OCI-LY7 (cell line): ENCODE measurements at regions of chr2 and their contacts with region 1.

Region 1: DNA sequence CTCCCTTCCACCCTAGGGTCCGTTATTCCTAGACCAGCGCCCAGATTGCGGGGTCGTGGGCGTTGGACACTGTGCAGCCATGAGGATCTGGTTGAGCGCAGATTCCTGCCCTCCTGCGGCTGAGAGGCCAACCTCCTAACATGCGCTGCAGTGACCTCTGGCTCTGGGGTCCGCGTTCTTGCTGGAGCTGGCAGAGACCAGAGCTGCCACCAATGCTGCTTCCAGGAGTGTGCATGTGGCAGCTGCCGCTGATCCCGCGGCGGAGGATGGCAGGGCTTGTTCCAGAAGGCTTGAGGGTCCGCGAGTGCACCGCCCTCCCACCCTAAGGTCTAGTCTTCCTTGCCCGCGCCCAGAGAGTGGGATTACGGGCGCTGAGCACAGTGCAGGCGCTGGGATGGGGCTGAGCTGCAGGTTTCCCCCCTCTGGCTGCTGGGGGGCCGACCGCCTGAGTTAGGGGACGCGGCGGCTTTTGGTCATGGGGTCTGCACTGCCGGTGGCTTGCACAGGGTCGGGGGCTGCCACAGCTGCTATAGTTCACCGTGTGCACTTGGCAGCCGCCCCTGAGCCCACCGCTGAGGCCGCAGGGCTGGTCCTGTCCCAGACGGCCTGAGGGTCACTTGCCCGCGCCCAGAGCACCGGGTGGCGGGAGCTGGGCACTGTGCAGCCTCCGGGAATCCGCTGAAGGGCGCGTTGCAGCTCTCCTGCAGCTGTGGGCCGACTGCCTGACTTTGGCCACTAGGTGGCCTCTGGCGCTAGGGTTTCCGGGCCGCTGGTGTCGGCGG is 145.9 kb downstream of the CCDC74A start:
- DNase-seq: peak; percentile 81
- H3K4me3 ChIP-seq: peak overlapping the region; percentile 62
- H3K27ac ChIP-seq: no peak overlapping the region
- H3K4me1 ChIP-seq: peaks cover 37% of the 10 kb centered on the region
- CTCF ChIP-seq: peak; percentile 81

Region 2: DNA sequence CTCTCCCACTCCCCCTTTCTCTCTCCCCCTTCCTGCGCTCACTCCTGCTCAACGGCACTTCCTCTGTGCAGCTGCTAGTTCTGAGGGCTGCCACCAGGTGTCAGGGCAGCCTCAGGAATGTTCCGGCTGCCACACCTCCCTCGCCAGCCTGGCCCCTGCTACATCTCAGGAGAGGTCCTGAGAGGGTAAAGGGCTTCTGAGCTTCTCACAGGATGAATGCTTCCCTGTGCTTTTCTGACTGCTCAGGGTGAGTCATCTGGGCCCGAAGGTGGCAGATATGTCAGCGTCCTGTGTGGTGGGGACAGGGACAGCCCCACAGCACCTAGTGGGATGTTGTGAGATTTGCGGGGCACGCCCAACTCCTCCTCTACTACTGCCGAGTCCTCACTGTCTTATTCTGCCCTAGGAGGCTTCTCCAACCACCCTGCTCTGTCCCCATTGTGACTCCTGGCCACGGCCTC is 519.5 kb before region 1 on chr2:
- CTCF ChIA-PET with region 1: no interaction called
- POLR2A ChIA-PET with region 1: no interaction called
- intact Hi-C with region 1: loop called (anchors 1 kb)
- DNase-seq: peak; percentile 83
- H3K4me3 ChIP-seq: no peak overlapping the region
- H3K27ac ChIP-seq: no peak overlapping the region
- H3K4me1 ChIP-seq: peaks cover 11% of the 10 kb centered on the region
- CTCF ChIP-seq: peak; percentile 93

Region 3: GRCh38 chr2:131492418-131493198 is 181.0 kb before region 1 on chr2:
- CTCF ChIA-PET with region 1: interaction called, 11 read pairs
- POLR2A ChIA-PET with region 1: interaction called, 5 read pairs
- intact Hi-C with region 1: loop called (anchors 1 kb)
- DNase-seq: peak; percentile 99
- H3K4me3 ChIP-seq: peak overlapping the region; percentile 83
- H3K27ac ChIP-seq: peak overlapping the region; percentile 83
- H3K4me1 ChIP-seq: peaks cover 30% of the 10 kb centered on the region
- CTCF ChIP-seq: peak; percentile 86

Region 4: GRCh38 chr2:131584940-131585339 is 88.6 kb before region 1 on chr2:
- CTCF ChIA-PET with region 1: interaction called, 6 read pairs
- POLR2A ChIA-PET with region 1: no interaction called
- intact Hi-C with region 1: loop called (anchors 2 kb)
- DNase-seq: peak; percentile 91
- H3K4me3 ChIP-seq: peak overlapping the region; percentile 21
- H3K27ac ChIP-seq: peak overlapping the region; percentile 87
- H3K4me1 ChIP-seq: peaks cover 100% of the 10 kb centered on the region
- CTCF ChIP-seq: no peak

Region 5: DNA sequence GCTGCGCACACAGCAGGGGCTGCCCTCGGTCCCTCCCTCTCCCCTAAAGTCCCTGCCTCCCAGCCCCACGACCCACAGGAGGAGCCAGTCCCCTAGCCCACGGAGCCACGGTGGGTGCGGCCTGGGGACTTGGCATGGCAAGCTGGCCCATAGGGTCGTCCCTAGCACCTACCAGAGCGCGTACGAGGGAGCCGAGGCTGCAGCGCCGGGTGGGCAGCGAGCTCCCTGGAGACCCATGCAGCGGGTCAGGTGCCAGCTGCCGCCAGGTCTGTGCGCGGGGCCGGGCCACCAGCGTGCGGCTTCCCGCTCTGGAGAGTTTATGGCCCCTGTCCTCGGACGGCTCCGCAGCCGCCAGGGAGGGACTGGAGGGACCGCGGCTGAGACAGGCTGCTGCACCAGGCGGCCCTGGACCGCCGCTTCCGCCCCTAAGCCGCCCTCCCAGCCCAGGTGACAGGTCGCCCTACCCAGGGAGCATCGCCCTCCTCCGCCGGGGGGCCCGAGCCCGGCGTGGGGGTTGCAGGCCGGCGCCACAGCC is 127.7 kb after region 1 on chr2:
- CTCF ChIA-PET with region 1: interaction called, 4 read pairs
- POLR2A ChIA-PET with region 1: no interaction called
- intact Hi-C with region 1: loop called (anchors 1 kb)
- DNase-seq: no peak
- H3K4me3 ChIP-seq: peak overlapping the region; percentile 40
- H3K27ac ChIP-seq: no peak overlapping the region
- H3K4me1 ChIP-seq: peaks cover 4% of the 10 kb centered on the region
- CTCF ChIP-seq: no peak